Panc1 (cell line): ENCODE measurements at regions of chr2 and their contacts with region 1.

Region 1: DNA sequence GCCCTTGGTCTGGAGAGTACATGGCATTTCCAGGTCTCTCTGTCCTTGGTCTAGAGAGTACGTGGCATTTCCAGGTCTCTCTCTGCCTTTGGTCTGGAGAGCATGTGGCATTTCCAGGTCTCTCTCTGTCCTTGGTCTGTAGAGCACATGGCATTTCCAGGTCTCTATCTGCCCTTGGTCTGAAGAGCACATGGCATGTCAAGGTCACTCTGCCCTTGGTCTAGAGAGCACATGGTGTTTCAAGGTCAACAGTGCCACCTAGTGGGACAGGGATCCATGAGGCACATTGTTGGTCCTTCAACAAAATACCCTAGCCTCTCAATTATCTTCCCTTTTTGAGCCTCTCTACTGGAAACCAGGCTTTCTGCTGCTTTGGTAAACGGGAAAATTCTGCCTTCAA is 250.2 kb downstream of the OTX1 start:
- DNase-seq: no peak
- ATAC-seq: peak; percentile 48; the same call in 1 of the 2 replicates
- H3K4me3 ChIP-seq: no peak overlapping the region
- H3K27ac ChIP-seq: no peak overlapping the region
- H3K4me1 ChIP-seq: no peaks in the 10 kb centered on the region
- H3K27me3 ChIP-seq: no peaks in the 10 kb centered on the region
- CTCF ChIP-seq: peak; percentile 55

Region 2: DNA sequence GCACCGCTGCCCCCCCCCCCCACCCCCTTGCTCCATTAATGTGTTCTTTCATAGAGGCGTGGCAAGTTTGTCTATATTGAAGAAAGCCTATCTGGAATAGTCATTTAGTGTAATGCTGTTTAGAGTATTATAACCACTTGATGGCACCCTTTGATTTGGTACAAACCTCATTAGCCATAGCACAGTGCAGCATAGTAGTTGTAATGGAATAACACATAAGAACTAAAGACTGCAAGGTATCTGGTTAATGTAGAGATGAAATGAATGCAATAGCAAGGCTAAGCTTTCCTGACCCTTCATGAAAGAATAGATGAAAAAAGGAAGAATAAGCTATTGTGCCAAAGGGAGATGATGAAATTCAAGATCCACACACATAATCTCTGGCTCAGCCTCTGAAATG is 513.4 kb before region 1 on chr2:
- CTCF ChIA-PET with region 1: no interaction called
- POLR2A ChIA-PET with region 1: no interaction called
- in situ Hi-C with region 1: no loop called
- intact Hi-C with region 1: loop called (anchors 5 kb)
- DNase-seq: peak; percentile 24
- ATAC-seq: peak; percentile 86
- H3K4me3 ChIP-seq: no peak overlapping the region
- H3K27ac ChIP-seq: no peak overlapping the region
- H3K4me1 ChIP-seq: peaks cover 12% of the 10 kb centered on the region; the same call in 1 of the 2 replicates
- H3K27me3 ChIP-seq: no peaks in the 10 kb centered on the region
- CTCF ChIP-seq: peak; percentile 61

Region 3: GRCh38 chr2:63544017-63544627 is 243.3 kb after region 1 on chr2:
- CTCF ChIA-PET with region 1: no interaction called
- POLR2A ChIA-PET with region 1: no interaction called
- in situ Hi-C with region 1: no loop called
- intact Hi-C with region 1: no loop called
- DNase-seq: no peak
- ATAC-seq: no peak
- H3K4me3 ChIP-seq: no peak overlapping the region
- H3K27ac ChIP-seq: no peak overlapping the region
- H3K4me1 ChIP-seq: no peaks in the 10 kb centered on the region
- H3K27me3 ChIP-seq: no peaks in the 10 kb centered on the region
- CTCF ChIP-seq: peak; percentile 68; the same call in 1 of the 2 replicates

Region 4: DNA sequence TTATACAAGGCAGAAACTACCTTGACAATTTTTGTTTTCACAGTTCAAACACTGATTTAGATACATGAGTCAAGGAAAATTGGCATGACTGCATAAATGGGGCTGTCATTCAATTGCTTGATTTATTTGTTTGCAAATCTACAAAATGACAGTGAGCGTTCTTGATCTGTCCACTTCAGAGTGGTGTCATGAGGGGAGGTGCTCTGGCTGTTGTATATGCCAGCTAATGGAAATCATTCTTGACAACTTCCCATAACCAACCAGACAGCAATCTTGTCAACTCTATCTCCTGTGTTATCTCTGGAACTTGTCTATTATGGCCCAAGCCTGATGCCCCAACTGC is 420.2 kb after region 1 on chr2:
- CTCF ChIA-PET with region 1: no interaction called
- POLR2A ChIA-PET with region 1: no interaction called
- in situ Hi-C with region 1: no loop called
- intact Hi-C with region 1: no loop called
- DNase-seq: no peak
- ATAC-seq: no peak
- H3K4me3 ChIP-seq: no peak overlapping the region
- H3K27ac ChIP-seq: no peak overlapping the region
- H3K4me1 ChIP-seq: no peaks in the 10 kb centered on the region
- H3K27me3 ChIP-seq: no peaks in the 10 kb centered on the region; the same call in 1 of the 2 replicates
- CTCF ChIP-seq: no peak